ENCODE measurements at regions of chr2 and their contacts with region 1.

Region 1: GRCh38 chr2:55419679-55420438 is at the start of gene CCDC88A:
- DNase-seq: peak; percentile 90 to 95
- ATAC-seq: peak; percentile 88 to 92
- H3K4me3 ChIP-seq: peak within 1 kb of the TSS; percentile 91 to 99 (median 96)
- H3K27ac ChIP-seq: peak within 1 kb of the TSS; percentile 89 to 94 (median 91)
- H3K4me1 ChIP-seq: peaks cover 23 to 27% of the 10 kb centered on the region in 2 donors
- H3K27me3 ChIP-seq: no peaks in the 10 kb centered on the region
- CTCF ChIP-seq: peak; percentile 31 to 41 (median 35)
- POLR2A ChIP-seq: peak; percentile 69 to 76
- total RNA-seq, gene CCDC88A: 12.9 to 28.7 (median 19.4) TPM

Region 2: GRCh38 chr2:55133467-55134315 is 286.2 kb before region 1 on chr2:
- in situ Hi-C with region 1: no loop called
- intact Hi-C with region 1: no loop called
- DNase-seq: no peak
- ATAC-seq: peak; percentile 63 to 72
- H3K4me3 ChIP-seq: peak overlapping the region; percentile 21 to 54 (median 43)
- H3K27ac ChIP-seq: peak overlapping the region; percentile 24 to 54 (median 43)
- H3K4me1 ChIP-seq: peaks cover 0 to 3% of the 10 kb centered on the region in 2 donors
- H3K27me3 ChIP-seq: no peaks in the 10 kb centered on the region
- CTCF ChIP-seq: no peak
- POLR2A ChIP-seq: no peak

Region 3: DNA sequence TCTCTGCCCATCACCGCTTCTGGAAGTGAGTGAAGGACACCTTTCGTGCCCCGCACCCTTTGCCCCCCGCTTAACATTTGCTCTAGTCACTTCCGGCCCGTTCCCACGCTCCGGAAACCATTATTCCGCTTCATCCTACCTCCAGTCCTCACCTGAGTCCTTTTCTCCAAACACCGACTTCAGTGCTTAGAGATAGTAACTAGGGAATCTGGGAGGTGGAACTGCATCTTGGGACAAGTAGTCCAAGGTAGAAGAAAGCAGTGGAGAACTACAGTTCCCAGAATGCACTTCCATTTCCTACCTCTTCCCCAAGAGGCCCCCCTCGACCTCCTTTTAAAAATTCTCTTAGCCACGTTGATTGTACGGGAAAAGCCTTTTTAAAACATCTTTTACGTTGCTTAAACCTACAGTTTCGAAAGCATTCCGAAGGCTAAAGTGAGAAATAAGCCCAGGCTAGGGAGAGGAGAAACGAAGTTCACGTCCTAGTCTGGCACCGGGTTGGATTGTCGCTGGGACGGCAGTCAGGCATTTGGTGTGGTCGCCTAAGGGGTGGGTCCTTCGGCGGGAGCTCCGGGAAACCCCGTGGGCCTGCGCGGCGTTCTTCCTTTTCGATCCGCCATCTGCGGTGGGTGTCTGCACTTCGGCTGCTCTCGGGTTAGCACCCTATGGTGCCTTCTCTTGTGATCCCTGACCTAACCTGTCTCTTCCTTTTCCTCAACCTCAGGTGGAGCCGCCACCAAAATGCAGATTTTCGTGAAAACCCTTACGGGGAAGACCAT is 187.6 kb before region 1 on chr2 and contains the starts of genes CLHC1 and RPS27A:
- in situ Hi-C with region 1: no loop called
- intact Hi-C with region 1: loop called (anchors 5 kb)
- DNase-seq: peak; percentile 86 to 87
- ATAC-seq: peak; percentile 98
- H3K4me3 ChIP-seq: peak within 1 kb of the TSS; percentile 72 to 96 (median 87)
- H3K27ac ChIP-seq: peak within 1 kb of the TSS; percentile 89 to 96 (median 92)
- H3K4me1 ChIP-seq: peaks cover 23 to 24% of the 10 kb centered on the region in 2 donors
- H3K27me3 ChIP-seq: no peaks in the 10 kb centered on the region
- CTCF ChIP-seq: peak in 2 of 5 experiments; percentile 9 to 16
- POLR2A ChIP-seq: peak; percentile 85 to 87
- total RNA-seq, gene CLHC1: 0.46 to 4.9 (median 0.85) TPM in 3 of 4 donors, not detected in the other
- total RNA-seq, gene RPS27A: 884 to 1,266 (median 965) TPM

Region 4: GRCh38 chr2:55268907-55269644 is 150.8 kb before region 1 on chr2 and contains the start of gene MTIF2:
- in situ Hi-C with region 1: no loop called
- intact Hi-C with region 1: loop called (anchors 5 kb)
- DNase-seq: peak; percentile 94 to 96
- ATAC-seq: peak; percentile 98 to 99
- H3K4me3 ChIP-seq: peak within 1 kb of the TSS; percentile 75 to 83 (median 79)
- H3K27ac ChIP-seq: peak within 1 kb of the TSS; percentile 81 to 93 (median 88)
- H3K4me1 ChIP-seq: peaks cover 6 to 16% of the 10 kb centered on the region in 2 donors
- H3K27me3 ChIP-seq: no peaks in the 10 kb centered on the region
- CTCF ChIP-seq: peak in 2 of 5 experiments; percentile 29 to 30
- POLR2A ChIP-seq: peak in 1 of 2 donors; percentile 57
- total RNA-seq, gene MTIF2: 23.0 to 42.5 (median 34.7) TPM

Region 5: GRCh38 chr2:55282110-55282917 is 137.5 kb before region 1 on chr2:
- in situ Hi-C with region 1: no loop called
- intact Hi-C with region 1: loop called (anchors 5 kb)
- DNase-seq: peak; percentile 67 to 81
- ATAC-seq: peak; percentile 90 to 94
- H3K4me3 ChIP-seq: peak overlapping the region; percentile 65 to 91 (median 77)
- H3K27ac ChIP-seq: peak overlapping the region; percentile 84 to 97 (median 88)
- H3K4me1 ChIP-seq: peaks cover 0 to 10% of the 10 kb centered on the region in 2 donors
- H3K27me3 ChIP-seq: no peaks in the 10 kb centered on the region
- CTCF ChIP-seq: no peak
- POLR2A ChIP-seq: peak; percentile 32 to 51

Region 6: DNA sequence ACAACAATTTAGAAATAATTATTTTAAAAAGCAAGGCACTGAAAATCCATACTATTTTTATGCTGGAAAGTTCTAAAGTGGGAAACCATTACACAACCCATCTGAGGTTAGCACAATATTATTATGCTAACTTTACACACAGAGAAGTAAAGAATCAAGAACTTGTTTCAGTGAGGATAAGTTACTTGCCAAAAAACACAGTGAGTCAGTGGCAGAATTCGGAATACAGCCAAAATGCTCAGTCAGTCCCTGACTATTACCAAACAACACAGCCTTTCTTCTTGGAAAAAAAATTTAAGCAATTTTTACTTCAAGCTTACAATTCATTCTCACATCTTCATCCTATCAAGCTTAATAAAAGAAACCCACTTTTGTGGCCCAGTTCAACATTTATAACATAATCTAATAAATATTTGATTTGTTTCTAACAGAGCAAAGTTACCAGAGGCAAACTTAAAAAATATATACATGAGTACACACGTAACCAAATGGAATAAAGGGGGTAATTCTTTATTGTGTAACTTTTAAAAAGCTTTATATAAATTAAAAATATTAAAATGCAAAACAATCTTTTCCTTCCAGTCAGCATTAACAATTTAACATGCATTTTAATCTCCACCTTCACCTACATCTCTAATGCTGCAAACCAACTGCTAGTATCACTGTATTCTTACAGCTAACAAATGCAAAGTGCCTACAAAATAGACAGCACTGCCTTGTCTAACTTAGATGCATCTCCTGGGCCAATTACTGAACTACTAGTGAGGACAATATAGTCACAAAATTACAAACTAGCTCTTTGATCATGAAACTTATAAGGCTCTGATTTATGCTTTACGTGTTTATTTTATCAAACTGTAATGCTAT is 55.4 kb before region 1 on chr2:
- in situ Hi-C with region 1: no loop called
- intact Hi-C with region 1: loop called (anchors 2 kb)
- DNase-seq: peak; percentile 35 to 36
- ATAC-seq: peak; percentile 93 to 94
- H3K4me3 ChIP-seq: no peak overlapping the region
- H3K27ac ChIP-seq: peak overlapping the region in 2 of 4 donors; percentile 19 to 22
- H3K4me1 ChIP-seq: peaks cover 6 to 16% of the 10 kb centered on the region in 2 donors
- H3K27me3 ChIP-seq: no peaks in the 10 kb centered on the region
- CTCF ChIP-seq: no peak
- POLR2A ChIP-seq: no peak

Region 7: GRCh38 chr2:55395724-55396605 is 23.9 kb before region 1 on chr2:
- in situ Hi-C with region 1: no loop called
- intact Hi-C with region 1: no loop called
- DNase-seq: no peak
- ATAC-seq: no peak
- H3K4me3 ChIP-seq: no peak overlapping the region
- H3K27ac ChIP-seq: no peak overlapping the region
- H3K4me1 ChIP-seq: no peaks in the 10 kb centered on the region
- H3K27me3 ChIP-seq: no peaks in the 10 kb centered on the region
- CTCF ChIP-seq: no peak
- POLR2A ChIP-seq: no peak

Region 8: DNA sequence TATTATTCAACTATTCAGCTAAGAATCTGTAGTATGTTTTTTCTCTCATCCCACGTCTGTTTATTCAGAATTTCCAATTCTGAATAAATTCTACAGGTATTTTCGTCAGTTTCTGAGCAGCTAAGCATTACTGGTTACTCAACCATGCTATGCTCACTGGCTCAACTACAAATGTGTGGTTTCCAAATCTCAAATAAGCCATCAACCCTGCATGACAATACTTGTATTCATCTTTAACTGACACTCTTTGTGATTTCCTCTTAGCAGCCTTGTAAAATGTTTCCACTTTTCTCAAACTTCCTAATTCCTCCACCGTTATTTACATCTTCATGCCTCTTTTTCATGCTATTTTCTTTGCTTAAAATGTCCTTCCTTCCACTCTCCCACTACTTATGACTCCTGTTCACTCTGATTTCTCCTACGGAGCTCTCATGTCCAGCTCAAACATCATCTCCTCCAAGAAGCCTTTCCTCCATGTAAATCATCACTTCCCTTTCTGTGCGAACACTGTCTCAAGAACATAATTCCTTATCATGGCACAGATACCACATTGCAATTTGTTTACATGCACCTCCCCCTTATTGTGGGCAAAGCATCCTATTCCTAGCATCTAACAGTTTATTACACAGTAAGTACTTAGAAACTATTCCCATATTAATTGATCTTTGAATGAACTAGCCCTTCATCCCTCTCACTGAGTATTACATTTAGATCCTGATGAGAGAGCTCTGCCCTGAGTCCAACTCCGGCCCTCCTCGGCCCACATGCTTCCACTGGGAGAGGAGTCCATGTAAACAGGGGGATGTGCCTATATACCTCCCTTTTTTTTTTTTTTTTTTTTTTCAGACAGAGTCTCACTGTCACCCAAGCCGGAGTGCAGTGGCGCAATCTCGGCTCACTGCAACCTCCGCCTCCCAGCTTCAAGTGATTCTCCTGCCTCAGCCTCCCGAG is 10.7 kb before region 1 on chr2:
- in situ Hi-C with region 1: no loop called
- intact Hi-C with region 1: no loop called
- DNase-seq: no peak
- ATAC-seq: no peak
- H3K4me3 ChIP-seq: no peak overlapping the region
- H3K27ac ChIP-seq: no peak overlapping the region
- H3K4me1 ChIP-seq: no peaks in the 10 kb centered on the region
- H3K27me3 ChIP-seq: no peaks in the 10 kb centered on the region
- CTCF ChIP-seq: no peak
- POLR2A ChIP-seq: no peak

Region 9: GRCh38 chr2:55461679-55462078 is 41.8 kb after region 1 on chr2:
- in situ Hi-C with region 1: no loop called
- intact Hi-C with region 1: no loop called
- DNase-seq: no peak
- ATAC-seq: no peak
- H3K4me3 ChIP-seq: no peak overlapping the region
- H3K27ac ChIP-seq: no peak overlapping the region
- H3K4me1 ChIP-seq: no peaks in the 10 kb centered on the region
- H3K27me3 ChIP-seq: no peaks in the 10 kb centered on the region
- CTCF ChIP-seq: no peak
- POLR2A ChIP-seq: no peak

Region 10: GRCh38 chr2:55519938-55520885 is 100.4 kb after region 1 on chr2:
- in situ Hi-C with region 1: no loop called
- intact Hi-C with region 1: loop called (anchors 2 kb)
- DNase-seq: no peak
- ATAC-seq: peak in 1 of 2 donors; percentile 12
- H3K4me3 ChIP-seq: peak overlapping the region; percentile 84 to 99 (median 93)
- H3K27ac ChIP-seq: peak overlapping the region; percentile 80 to 84 (median 82)
- H3K4me1 ChIP-seq: peaks cover 9 to 13% of the 10 kb centered on the region in 2 donors
- H3K27me3 ChIP-seq: no peaks in the 10 kb centered on the region
- CTCF ChIP-seq: no peak
- POLR2A ChIP-seq: no peak

Region 11: DNA sequence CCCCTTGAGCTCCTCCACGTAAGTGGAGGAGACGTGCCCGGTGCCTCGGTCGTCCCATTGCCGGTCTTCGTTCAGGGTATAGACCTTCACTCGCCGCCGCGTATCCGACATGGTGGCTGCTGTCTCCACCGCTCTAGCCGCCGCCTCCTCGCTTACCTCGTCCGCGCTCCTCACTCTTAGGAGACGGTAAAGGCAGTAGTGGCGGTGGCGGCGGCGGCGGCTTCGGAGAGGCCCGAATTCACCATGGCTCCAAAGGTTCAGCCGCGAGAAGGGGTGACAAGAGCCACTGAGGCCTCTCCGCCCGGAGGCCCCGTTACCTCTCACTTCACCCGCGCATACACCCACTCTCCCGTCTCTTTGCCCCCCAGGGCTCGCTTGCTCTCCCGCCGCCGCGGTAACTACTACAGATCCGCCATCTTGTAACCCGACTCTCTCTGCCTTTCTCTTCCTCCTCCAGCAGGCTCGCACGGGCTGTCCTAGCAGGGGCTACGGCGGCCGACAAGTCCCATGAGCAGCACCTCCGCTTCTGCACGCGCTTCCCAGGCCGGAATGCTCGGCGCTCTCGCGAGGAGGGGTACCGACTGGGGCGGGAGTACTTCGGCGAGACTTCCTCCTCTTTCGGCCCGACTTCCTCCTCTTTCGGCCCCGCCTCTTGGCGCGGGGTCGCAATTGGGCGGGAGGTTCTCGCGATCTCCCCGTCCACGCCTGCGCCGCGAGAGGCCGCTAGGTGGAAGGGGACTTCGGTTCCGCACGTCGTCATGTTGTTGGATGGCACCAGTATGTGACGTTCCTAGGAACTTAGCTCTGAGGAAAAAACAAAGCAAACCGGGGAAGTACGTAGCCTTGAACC is 197.5 kb after region 1 on chr2 and contains the start of gene PPP4R3B:
- in situ Hi-C with region 1: no loop called
- intact Hi-C with region 1: loop called (anchors 2 kb)
- DNase-seq: peak; percentile 99 to 100
- ATAC-seq: peak; percentile 83 to 86
- H3K4me3 ChIP-seq: peak within 1 kb of the TSS; percentile 85 to 99 (median 94)
- H3K27ac ChIP-seq: peak within 1 kb of the TSS; percentile 90 to 100 (median 96)
- H3K4me1 ChIP-seq: peaks cover 28 to 44% of the 10 kb centered on the region in 2 donors
- H3K27me3 ChIP-seq: no peaks in the 10 kb centered on the region
- CTCF ChIP-seq: peak; percentile 56 to 84 (median 69)
- POLR2A ChIP-seq: peak; percentile 87 to 93
- total RNA-seq, gene PPP4R3B: 20.6 to 30.3 (median 25.4) TPM

Measured in gastrocnemius medialis (tissue), 4 donors.